H1 (cell line): ENCODE measurements at regions of chr1 and their contacts with region 1.

Region 1: DNA sequence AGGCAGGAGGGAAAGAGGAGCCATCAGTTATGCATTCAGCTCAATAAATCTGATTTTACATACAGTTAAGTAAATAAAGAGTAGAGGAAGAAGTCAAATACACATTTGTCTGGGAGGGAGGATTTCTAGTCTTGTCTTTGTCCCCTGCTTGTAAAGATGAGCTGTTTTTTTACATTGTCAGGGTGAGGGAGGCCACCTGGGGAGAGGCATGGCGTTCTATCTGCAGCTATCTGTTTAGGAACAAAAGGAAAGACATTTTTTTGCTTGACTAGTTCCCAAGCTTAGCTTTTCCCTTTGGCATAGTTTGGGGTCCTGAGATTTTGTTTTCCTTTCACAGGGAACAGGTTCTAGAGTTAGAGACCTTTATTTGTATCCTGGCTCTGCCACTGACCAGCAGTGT is 14.9 kb downstream of the RAD54L start:
- DNase-seq: no peak
- H3K4me3 ChIP-seq: no peak overlapping the region
- H3K27ac ChIP-seq: no peak overlapping the region
- H3K4me1 ChIP-seq: no peaks in the 10 kb centered on the region
- H3K27me3 ChIP-seq: no peaks in the 10 kb centered on the region; a peak in 1 of 7 replicates
- CTCF ChIP-seq: no peak
- EP300 ChIP-seq: no peak
- POLR2A ChIP-seq: no peak
- RAD21 ChIP-seq: no peak

Region 2: DNA sequence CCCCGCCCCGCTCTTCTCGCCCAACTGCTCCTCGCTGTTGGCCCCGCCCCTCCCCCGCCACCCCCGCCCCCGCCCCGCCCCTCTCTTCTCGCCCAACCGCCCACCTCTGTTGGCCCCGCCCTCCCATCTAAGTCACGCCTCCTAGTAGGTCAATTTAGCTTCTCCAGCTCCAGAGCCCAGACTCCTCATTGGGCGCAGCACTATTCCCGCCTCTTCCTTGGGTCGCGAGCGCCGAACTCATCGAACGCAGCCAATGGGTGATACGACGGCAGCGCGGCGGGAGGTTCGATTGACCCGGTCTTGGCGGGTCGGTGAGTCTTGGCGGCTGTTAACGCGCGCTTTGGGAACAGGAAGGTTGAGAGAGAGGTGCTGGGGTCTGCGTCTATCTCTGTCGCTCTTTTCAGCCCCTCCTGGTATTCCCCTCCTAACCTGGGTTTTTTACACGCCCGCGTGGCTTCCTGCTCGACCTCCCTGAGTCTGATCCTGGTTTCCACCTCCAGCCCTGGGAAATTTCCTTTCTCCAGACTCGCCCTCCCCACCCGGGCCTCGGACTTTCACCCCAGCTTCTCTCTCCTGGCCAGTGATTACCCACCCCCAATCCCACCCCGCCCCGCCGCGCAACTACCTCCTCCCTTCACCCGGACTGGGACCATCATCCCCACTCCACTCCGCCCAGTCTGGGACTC is 14.9 kb before region 1 on chr1 and contains the start of gene RAD54L:
- CTCF ChIA-PET with region 1: interaction called, 7 read pairs
- POLR2A ChIA-PET with region 1: interaction called, 100 read pairs
- DNase-seq: peak; percentile 96 to 98
- H3K4me3 ChIP-seq: peak within 1 kb of the TSS; percentile 87 to 94 (median 92)
- H3K27ac ChIP-seq: peak within 1 kb of the TSS; percentile 94
- H3K4me1 ChIP-seq: peaks cover 4 to 15% (median 5%) of the 10 kb centered on the region in 4 experiments; a peak in 5 of 7 replicates
- H3K27me3 ChIP-seq: no peaks in the 10 kb centered on the region
- CTCF ChIP-seq: no peak
- EP300 ChIP-seq: no peak
- POLR2A ChIP-seq: peak; percentile 75 to 97
- RAD21 ChIP-seq: no peak
- total RNA-seq, gene RAD54L: 47.9 and 50.3 TPM in 2 replicates